ENCODE measurements at regions of chr5 and their contacts with region 1.

Region 1: GRCh38 chr5:10353241-10354047 is at the start of gene MARCHF6:
- DNase-seq: peak; percentile 95 to 99 (median 96)
- ATAC-seq: peak; percentile 86
- H3K4me3 ChIP-seq: peak within 1 kb of the TSS; percentile 87
- H3K4me3 Mint-ChIP-seq: peak within 1 kb of the TSS; percentile 99
- H3K27ac ChIP-seq: peak within 1 kb of the TSS; percentile 89 to 93
- H3K27ac Mint-ChIP-seq: peak within 1 kb of the TSS; percentile 97
- H3K4me1 ChIP-seq: peaks cover 25% of the 10 kb centered on the region
- H3K4me1 Mint-ChIP-seq: peaks cover 58% of the 10 kb centered on the region
- H3K27me3 ChIP-seq: no peaks in the 10 kb centered on the region
- H3K27me3 Mint-ChIP-seq: no peaks in the 10 kb centered on the region
- CTCF ChIP-seq: no peak
- total RNA-seq, gene MARCHF6: 176 to 182 TPM

Region 2: DNA sequence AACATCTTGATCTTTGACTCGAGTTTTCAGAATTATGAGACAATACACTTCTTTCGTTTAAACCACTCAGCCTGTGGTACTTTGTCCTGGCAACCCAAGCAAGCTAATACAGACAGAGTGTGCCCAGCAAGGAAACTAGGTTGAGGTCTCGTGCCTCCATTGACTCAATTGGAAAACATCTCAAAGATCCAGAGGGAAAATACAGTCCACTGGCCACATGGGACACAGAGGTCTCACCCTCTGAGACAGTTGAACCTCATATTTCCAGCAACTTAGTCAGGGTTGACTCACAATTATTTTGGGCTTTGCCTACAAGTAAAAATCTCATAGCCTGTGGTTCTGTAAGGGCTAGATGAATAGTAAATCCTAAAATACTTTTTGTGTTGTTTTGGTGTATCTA is 1853.0 kb before region 1 on chr5:
- CTCF ChIA-PET with region 1: no interaction called
- POLR2A ChIA-PET with region 1: no interaction called
- intact Hi-C with region 1: no loop called
- DNase-seq: no peak
- ATAC-seq: no peak
- H3K4me3 ChIP-seq: no peak overlapping the region
- H3K4me3 Mint-ChIP-seq: no peak overlapping the region
- H3K27ac ChIP-seq: no peak overlapping the region
- H3K27ac Mint-ChIP-seq: no peak overlapping the region
- H3K4me1 ChIP-seq: no peaks in the 10 kb centered on the region
- H3K4me1 Mint-ChIP-seq: no peaks in the 10 kb centered on the region
- H3K27me3 ChIP-seq: no peaks in the 10 kb centered on the region
- H3K27me3 Mint-ChIP-seq: no peaks in the 10 kb centered on the region
- CTCF ChIP-seq: no peak

Region 3: GRCh38 chr5:10293907-10294662 is 59.4 kb before region 1 on chr5:
- CTCF ChIA-PET with region 1: no interaction called
- POLR2A ChIA-PET with region 1: interaction called, 3 read pairs
- intact Hi-C with region 1: loop called in 1 of 2 experiments (anchors 5 kb)
- DNase-seq: no peak
- ATAC-seq: no peak
- H3K4me3 ChIP-seq: no peak overlapping the region
- H3K4me3 Mint-ChIP-seq: no peak overlapping the region
- H3K27ac ChIP-seq: no peak overlapping the region
- H3K27ac Mint-ChIP-seq: no peak overlapping the region
- H3K4me1 ChIP-seq: no peaks in the 10 kb centered on the region
- H3K4me1 Mint-ChIP-seq: no peaks in the 10 kb centered on the region
- H3K27me3 ChIP-seq: peaks cover 0 to 4% of the 10 kb centered on the region in 2 experiments
- H3K27me3 Mint-ChIP-seq: no peaks in the 10 kb centered on the region
- CTCF ChIP-seq: no peak

Region 4: DNA sequence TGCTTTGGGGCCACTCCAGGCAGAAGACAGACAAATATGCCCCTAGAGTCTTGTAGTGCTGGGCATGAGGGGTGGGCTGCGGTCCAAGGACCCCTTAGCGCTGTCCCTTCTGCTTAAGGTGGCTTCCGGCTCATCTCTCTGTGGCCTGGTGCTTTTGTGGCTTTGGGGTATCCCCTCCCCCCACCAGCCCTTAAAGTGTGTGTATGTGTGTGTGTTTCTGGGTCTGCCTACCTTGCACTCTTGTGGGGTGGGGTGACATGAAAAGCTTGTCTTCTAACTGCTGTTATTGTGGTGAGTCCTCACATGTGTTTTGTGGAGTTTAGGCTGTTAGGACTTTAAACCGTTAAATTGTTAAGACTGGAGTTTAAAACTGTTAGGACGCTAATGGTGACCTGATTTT is 23.6 kb after region 1 on chr5:
- CTCF ChIA-PET with region 1: no interaction called
- POLR2A ChIA-PET with region 1: interaction called, 12 read pairs
- intact Hi-C with region 1: no loop called
- DNase-seq: no peak
- ATAC-seq: no peak
- H3K4me3 ChIP-seq: no peak overlapping the region
- H3K4me3 Mint-ChIP-seq: no peak overlapping the region
- H3K27ac ChIP-seq: no peak overlapping the region
- H3K27ac Mint-ChIP-seq: peak overlapping the region; percentile 45
- H3K4me1 ChIP-seq: peaks cover 28% of the 10 kb centered on the region
- H3K4me1 Mint-ChIP-seq: peaks cover 63% of the 10 kb centered on the region
- H3K27me3 ChIP-seq: no peaks in the 10 kb centered on the region
- H3K27me3 Mint-ChIP-seq: no peaks in the 10 kb centered on the region
- CTCF ChIP-seq: no peak

Region 5: DNA sequence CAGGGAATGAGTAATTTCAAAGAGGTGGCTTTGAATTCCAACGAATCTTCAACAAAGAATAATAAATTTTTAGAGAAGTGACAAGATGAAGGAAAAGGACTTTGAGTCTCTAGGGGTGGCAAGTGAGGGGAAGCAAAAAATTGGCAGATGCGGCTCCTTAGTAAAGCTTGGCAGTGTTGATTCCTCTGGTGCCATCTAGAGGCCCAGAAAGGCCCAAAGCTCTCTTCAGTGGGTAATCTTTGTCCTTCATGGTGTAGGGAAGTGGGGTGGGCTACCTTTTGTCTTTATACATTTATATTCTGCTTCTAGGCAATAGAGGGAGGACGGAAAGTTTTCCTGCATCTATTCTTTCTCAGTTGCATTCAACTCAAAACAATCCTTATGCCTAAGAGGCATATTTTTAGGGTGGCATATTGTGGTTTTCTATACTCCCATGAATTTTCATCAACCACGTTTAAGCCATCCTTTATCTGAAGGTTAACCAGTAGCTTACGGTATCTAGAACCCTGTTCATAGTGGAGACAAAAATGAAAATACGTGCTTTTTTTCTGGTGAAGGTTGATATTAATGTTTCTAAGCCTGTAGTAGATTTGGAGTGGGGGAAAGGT is 70.8 kb after region 1 on chr5:
- CTCF ChIA-PET with region 1: no interaction called
- POLR2A ChIA-PET with region 1: interaction called, 22 read pairs
- intact Hi-C with region 1: no loop called
- DNase-seq: peak in 5 of 14 experiments; percentile 12 to 48 (median 28)
- ATAC-seq: peak; percentile 38
- H3K4me3 ChIP-seq: no peak overlapping the region
- H3K4me3 Mint-ChIP-seq: no peak overlapping the region
- H3K27ac ChIP-seq: no peak overlapping the region
- H3K27ac Mint-ChIP-seq: peak overlapping the region; percentile 16
- H3K4me1 ChIP-seq: peaks cover 9% of the 10 kb centered on the region
- H3K4me1 Mint-ChIP-seq: peaks cover 43% of the 10 kb centered on the region
- H3K27me3 ChIP-seq: no peaks in the 10 kb centered on the region
- H3K27me3 Mint-ChIP-seq: no peaks in the 10 kb centered on the region
- CTCF ChIP-seq: peak; percentile 20

Region 6: GRCh38 chr5:10563945-10564837 is 210.7 kb after region 1 on chr5 and contains the start of gene ANKRD33B:
- CTCF ChIA-PET with region 1: no interaction called
- POLR2A ChIA-PET with region 1: no interaction called
- intact Hi-C with region 1: loop called in 1 of 2 experiments (anchors 5 kb)
- DNase-seq: peak; percentile 49 to 89 (median 70)
- ATAC-seq: peak; percentile 81
- H3K4me3 ChIP-seq: peak within 1 kb of the TSS; percentile 63
- H3K4me3 Mint-ChIP-seq: peak within 1 kb of the TSS; percentile 87
- H3K27ac ChIP-seq: no peak within 1 kb of the TSS
- H3K27ac Mint-ChIP-seq: no peak within 1 kb of the TSS
- H3K4me1 ChIP-seq: peaks cover 40% of the 10 kb centered on the region
- H3K4me1 Mint-ChIP-seq: peaks cover 13% of the 10 kb centered on the region
- H3K27me3 ChIP-seq: peaks cover 0 to 11% of the 10 kb centered on the region in 2 experiments
- H3K27me3 Mint-ChIP-seq: peaks cover 5% of the 10 kb centered on the region
- CTCF ChIP-seq: no peak
- total RNA-seq, gene ANKRD33B: 0.99 to 1.3 TPM

Measured in CD4-positive, alpha-beta T cell (primary cell).